Esophagus squamous epithelium (tissue), 5 donors: ENCODE measurements at regions of chr12 and their contacts with region 1.

Region 1: GRCh38 chr12:1583421-1584078 is 10.8 kb downstream of the FBXL14 start:
- DNase-seq: no peak
- H3K4me3 ChIP-seq: peak overlapping the region in 1 of 4 donors; percentile 29
- H3K27ac ChIP-seq: no peak overlapping the region
- H3K4me1 ChIP-seq: peaks cover 7 to 43% (median 12%) of the 10 kb centered on the region in 3 donors
- H3K27me3 ChIP-seq: no peaks in the 10 kb centered on the region
- CTCF ChIP-seq: peak; percentile 74 to 92 (median 88)
- POLR2A ChIP-seq: no peak

Region 2: GRCh38 chr12:1117970-1118563 is 465.5 kb before region 1 on chr12:
- intact Hi-C with region 1: loop called (anchors 10 kb)
- DNase-seq: no peak
- H3K4me3 ChIP-seq: no peak overlapping the region
- H3K27ac ChIP-seq: no peak overlapping the region
- H3K4me1 ChIP-seq: peaks cover 0 to 28% (median 4%) of the 10 kb centered on the region in 3 donors
- H3K27me3 ChIP-seq: no peaks in the 10 kb centered on the region
- CTCF ChIP-seq: peak; percentile 86 to 97 (median 95)
- POLR2A ChIP-seq: no peak